Activated CD8-positive, alpha-beta T cell treated with anti-CD3 and anti-CD28 coated beads for 36 hours (primary cell): ENCODE measurements at regions of chr6 and their contacts with region 1.

Region 1: DNA sequence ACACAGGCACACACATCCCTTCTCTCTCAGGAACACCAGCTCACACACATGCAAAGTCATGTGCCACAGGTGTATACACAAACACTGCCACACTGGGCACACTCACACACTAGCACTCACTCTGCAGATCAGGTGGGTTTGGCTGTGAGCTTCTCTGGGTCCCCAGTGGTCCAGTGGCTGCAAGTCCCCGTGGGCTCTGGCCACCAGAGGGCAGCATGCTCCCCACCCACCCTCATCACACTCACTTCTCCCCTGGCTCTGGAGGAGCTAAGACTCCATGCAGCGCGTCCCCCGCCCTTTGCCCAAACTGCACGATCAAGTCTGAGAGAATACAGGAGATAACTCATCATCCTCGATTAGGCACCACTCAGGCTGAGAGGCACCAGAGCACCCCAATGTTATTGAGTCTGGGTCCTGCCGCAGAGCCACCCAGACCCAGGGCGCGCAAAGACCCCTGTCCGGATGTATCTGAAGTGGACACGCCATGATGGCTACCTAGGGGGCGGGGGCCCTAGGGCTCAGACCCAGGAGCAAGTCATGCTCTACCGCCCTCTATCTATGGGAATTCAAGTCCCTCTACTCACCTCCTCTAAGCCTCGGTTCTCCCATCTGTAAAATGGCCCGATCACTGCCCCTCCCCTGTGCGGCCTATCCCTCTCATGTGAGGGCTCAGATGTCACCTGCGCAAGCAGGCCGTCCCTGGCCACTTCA is 90.5 kb downstream of the GRM4 start:
- DNase-seq: peak; percentile 82
- ATAC-seq: peak; percentile 90
- H3K4me3 Mint-ChIP-seq: no peak overlapping the region
- H3K27ac Mint-ChIP-seq: no peak overlapping the region
- H3K4me1 Mint-ChIP-seq: no peaks in the 10 kb centered on the region
- H3K27me3 Mint-ChIP-seq: no peaks in the 10 kb centered on the region
- CTCF ChIP-seq: peak; percentile 71

Region 2: GRCh38 chr6:34070315-34071135 is 15.1 kb after region 1 on chr6:
- CTCF ChIA-PET with region 1: interaction called, 17 read pairs
- POLR2A ChIA-PET with region 1: no interaction called
- intact Hi-C with region 1: no loop called
- DNase-seq: no peak
- ATAC-seq: peak; percentile 45
- H3K4me3 Mint-ChIP-seq: no peak overlapping the region
- H3K27ac Mint-ChIP-seq: no peak overlapping the region
- H3K4me1 Mint-ChIP-seq: no peaks in the 10 kb centered on the region
- H3K27me3 Mint-ChIP-seq: no peaks in the 10 kb centered on the region
- CTCF ChIP-seq: no peak

Region 3: DNA sequence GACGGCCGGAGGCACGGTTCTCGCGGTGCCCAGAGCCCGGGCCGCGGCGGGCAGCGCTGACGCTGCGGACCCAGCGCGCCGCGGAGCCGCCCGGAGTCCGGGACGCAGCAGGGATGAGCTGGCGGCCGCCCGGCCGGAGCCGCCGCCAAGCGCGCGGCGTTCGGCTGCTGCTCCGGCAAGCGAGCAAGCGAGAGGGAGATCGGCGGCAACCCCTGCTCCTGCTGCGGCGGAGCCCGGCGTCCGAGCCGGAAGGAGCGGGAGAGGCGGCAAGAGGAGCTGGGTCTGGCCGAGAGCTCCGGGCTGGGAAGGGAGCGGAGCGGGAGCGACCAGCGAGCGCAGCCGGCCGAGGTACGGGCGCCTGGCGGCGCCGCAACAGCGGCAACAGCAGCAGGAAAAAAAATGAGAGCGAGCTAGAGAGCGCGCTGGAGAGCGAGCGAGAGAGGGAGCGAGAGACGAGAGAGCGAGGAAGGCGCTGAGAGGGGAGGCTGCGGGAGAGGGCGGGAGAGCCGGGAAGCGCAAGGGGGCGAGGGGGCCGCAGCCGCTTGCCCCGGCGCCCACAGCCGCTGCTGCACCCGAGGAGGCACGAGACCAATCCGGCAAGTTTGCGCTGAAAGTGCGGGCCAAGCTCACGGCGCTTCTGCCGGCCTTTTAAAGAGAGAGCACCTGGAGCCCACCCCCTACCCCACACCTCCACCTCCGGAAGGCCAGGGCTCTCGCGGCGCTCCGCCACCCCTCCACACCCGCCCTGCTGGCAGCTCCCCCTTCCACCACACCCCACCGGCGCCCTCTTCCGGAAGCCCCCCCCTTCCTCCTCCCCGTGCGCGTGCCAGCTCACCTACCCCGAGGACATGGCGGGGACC is 90.0 kb after region 1 on chr6:
- CTCF ChIA-PET with region 1: interaction called, 19 read pairs
- POLR2A ChIA-PET with region 1: interaction called, 3 read pairs
- intact Hi-C with region 1: no loop called
- DNase-seq: peak; percentile 25
- ATAC-seq: peak; percentile 34
- H3K4me3 Mint-ChIP-seq: peak overlapping the region; percentile 32
- H3K27ac Mint-ChIP-seq: no peak overlapping the region
- H3K4me1 Mint-ChIP-seq: peaks cover 11% of the 10 kb centered on the region
- H3K27me3 Mint-ChIP-seq: peaks cover 59% of the 10 kb centered on the region
- CTCF ChIP-seq: no peak

Region 4: GRCh38 chr6:34154668-34155447 is 99.5 kb after region 1 on chr6:
- CTCF ChIA-PET with region 1: interaction called, 96 read pairs
- POLR2A ChIA-PET with region 1: no interaction called
- intact Hi-C with region 1: loop called (anchors 2 kb)
- DNase-seq: peak; percentile 72
- ATAC-seq: peak; percentile 96
- H3K4me3 Mint-ChIP-seq: no peak overlapping the region
- H3K27ac Mint-ChIP-seq: no peak overlapping the region
- H3K4me1 Mint-ChIP-seq: peaks cover 4% of the 10 kb centered on the region
- H3K27me3 Mint-ChIP-seq: peaks cover 31% of the 10 kb centered on the region
- CTCF ChIP-seq: peak; percentile 100